ENCODE measurements at regions of chr6 and their contacts with region 1.

Region 1: DNA sequence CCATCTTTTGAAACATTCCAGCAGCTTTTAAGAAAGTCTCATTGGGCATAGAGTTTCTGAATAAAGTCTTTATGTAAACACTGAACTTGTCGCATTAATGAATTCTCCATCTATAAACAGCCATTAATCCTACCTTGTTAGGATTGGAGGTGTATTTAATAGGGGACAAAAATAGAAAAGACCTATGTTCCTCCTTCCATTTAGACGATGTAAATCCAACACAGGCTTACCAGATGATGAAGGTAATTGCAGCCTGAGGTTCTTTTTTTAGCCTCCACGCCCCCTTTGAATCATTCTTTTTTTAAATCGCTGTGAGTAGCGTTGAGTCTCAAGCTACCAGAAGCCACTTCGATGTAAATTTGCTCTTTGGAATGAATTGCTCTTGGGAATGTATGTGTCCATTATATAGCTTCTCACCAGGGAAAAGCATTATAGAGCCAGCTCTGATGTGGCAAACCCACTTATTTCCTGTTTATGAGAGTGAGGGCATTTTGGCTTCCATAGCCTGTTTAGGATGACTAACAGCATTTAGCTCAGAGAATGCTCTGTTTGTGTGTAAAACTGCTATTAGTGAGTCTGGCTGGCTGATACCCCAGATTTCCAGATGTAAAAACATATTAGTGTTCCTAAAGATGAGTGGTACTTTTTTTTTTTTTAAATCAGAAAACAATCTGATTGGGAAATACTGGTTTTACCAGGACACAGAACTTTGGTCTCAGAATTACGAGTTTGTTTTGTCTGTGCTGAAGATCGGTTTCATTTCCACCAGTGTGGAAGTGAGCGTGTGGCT is 74.9 kb upstream of the CLDN20 start:
- DNase-seq: peak in 1 of 2 experiments; percentile 43
- H3K4me3 ChIP-seq: no peak overlapping the region
- H3K27ac ChIP-seq: no peak overlapping the region
- H3K4me1 ChIP-seq: peaks cover 30% of the 10 kb centered on the region
- H3K27me3 ChIP-seq: no peaks in the 10 kb centered on the region
- CTCF ChIP-seq: no peak

Region 2: DNA sequence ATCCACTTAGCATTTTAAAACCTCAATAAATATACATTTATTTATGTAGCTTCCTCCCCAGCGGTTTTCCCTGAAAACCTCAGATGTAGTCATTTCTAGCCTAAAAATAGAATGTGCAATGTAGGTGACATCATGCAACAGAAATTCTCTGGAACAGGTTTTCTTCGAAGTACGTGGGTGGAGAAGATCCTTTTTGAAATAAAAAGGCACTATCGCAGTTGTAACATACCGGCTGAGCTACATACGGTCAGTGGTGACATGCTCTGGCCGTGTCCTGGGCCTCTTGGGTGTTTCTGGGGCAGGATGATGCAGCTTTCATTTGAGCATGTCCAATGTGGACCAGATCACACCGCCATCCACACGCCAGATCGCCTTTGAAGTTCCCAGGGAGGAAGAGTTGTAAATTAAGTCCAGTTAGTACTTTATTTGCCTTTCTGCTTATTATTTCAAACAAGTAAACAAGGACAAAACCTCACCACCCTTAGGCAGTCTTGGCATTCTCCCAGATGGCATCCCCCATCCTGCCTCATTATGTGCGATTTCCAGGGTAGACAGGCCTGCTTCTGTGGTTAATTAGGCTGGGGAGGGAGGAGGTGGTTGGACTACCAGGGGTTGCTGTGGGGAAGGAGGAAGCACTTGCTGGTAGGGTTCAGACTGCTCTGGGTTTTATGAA is 34.6 kb before region 1 on chr6:
- CTCF ChIA-PET with region 1: interaction called, 16 read pairs
- POLR2A ChIA-PET with region 1: no interaction called
- intact Hi-C with region 1: no loop called
- DNase-seq: peak; percentile 32 to 86
- H3K4me3 ChIP-seq: peak overlapping the region; percentile 0; the same call in 1 of the 2 replicates
- H3K27ac ChIP-seq: peak overlapping the region; percentile 58
- H3K4me1 ChIP-seq: peaks cover 61% of the 10 kb centered on the region
- H3K27me3 ChIP-seq: no peaks in the 10 kb centered on the region
- CTCF ChIP-seq: no peak

Region 3: DNA sequence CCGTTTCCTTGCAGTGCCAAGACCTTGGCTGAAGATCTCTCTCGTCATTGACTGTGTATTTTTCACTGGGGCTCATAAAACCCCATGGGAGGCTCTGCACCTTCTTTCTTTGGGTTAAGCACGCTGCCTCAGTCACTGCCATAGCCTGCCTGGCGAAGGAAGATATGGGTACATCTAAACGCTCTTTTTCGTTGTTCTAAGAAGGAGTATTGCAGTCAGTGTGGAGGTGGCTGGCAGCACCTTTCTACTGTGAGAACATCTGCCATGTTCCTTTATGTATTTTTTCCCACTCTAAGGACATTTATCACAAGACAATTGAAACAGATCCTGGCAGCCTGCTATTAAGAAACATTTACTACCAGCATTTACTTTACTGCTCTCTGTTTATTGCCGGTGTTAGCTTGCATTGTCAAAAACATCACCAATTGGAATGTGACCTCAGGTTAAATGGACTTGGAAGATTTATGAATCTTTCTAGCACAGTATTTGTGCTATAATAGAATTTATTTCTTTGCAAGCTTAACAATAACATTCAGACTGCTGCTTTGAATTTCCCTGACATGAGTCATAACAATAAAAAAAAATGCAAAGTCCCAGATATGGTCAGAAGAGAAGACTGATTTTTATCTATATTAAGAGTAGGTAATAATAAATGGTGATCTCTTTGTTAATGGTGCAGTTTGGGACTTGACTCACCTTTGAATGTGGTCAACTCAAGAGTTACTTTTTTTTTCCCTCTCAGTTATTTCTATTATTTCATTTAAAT is 12.7 kb after region 1 on chr6:
- CTCF ChIA-PET with region 1: no interaction called
- POLR2A ChIA-PET with region 1: interaction called, 28 read pairs
- intact Hi-C with region 1: no loop called
- DNase-seq: peak; percentile 5 to 97
- H3K4me3 ChIP-seq: no peak overlapping the region
- H3K27ac ChIP-seq: peak overlapping the region; percentile 78
- H3K4me1 ChIP-seq: peaks cover 21% of the 10 kb centered on the region
- H3K27me3 ChIP-seq: no peaks in the 10 kb centered on the region
- CTCF ChIP-seq: no peak

Region 4: GRCh38 chr6:155223646-155224451 is 34.9 kb after region 1 on chr6:
- CTCF ChIA-PET with region 1: no interaction called
- POLR2A ChIA-PET with region 1: interaction called, 5 read pairs
- intact Hi-C with region 1: loop called (anchors 1 kb)
- DNase-seq: peak; percentile 43 to 97
- H3K4me3 ChIP-seq: peak overlapping the region; percentile 9; the same call in 1 of the 2 replicates
- H3K27ac ChIP-seq: peak overlapping the region; percentile 92
- H3K4me1 ChIP-seq: peaks cover 25% of the 10 kb centered on the region
- H3K27me3 ChIP-seq: no peaks in the 10 kb centered on the region
- CTCF ChIP-seq: no peak

Region 5: GRCh38 chr6:155248008-155249001 is 59.4 kb after region 1 on chr6:
- CTCF ChIA-PET with region 1: interaction called, 15 read pairs
- POLR2A ChIA-PET with region 1: interaction called, 4 read pairs
- intact Hi-C with region 1: loop called (anchors 1 kb)
- DNase-seq: peak; percentile 61 to 81
- H3K4me3 ChIP-seq: peak overlapping the region; percentile 54
- H3K27ac ChIP-seq: peak overlapping the region; percentile 96
- H3K4me1 ChIP-seq: peaks cover 31% of the 10 kb centered on the region
- H3K27me3 ChIP-seq: no peaks in the 10 kb centered on the region
- CTCF ChIP-seq: peak; percentile 82

Region 6: DNA sequence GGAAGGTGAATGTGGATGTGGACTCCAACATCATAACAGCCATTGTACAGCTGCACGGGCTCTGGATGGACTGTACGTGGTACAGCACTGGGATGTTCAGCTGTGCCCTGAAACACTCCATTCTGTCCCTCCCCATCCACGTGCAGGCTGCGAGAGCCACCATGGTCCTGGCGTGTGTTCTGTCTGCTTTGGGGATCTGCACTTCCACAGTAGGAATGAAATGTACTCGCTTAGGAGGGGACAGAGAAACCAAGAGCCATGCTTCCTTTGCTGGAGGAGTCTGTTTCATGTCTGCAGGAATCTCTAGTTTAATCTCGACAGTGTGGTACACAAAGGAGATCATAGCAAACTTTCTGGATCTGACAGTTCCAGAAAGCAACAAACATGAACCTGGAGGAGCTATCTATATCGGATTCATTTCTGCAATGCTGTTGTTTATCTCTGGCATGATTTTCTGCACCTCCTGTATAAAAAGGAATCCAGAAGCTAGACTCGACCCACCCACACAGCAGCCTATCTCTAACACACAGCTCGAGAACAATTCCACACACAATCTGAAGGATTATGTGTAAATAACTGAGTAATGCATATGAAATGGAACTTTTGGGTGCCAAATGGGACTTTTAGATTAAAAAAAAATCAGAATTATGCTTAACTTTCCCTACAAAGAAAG is 87.0 kb after region 1 on chr6:
- CTCF ChIA-PET with region 1: no interaction called
- POLR2A ChIA-PET with region 1: no interaction called
- intact Hi-C with region 1: no loop called
- DNase-seq: no peak
- H3K4me3 ChIP-seq: no peak overlapping the region
- H3K27ac ChIP-seq: no peak overlapping the region
- H3K4me1 ChIP-seq: no peaks in the 10 kb centered on the region
- H3K27me3 ChIP-seq: no peaks in the 10 kb centered on the region
- CTCF ChIP-seq: no peak

Region 7: GRCh38 chr6:155314092-155314772 is 125.3 kb after region 1 on chr6 and contains the start of gene TFB1M:
- CTCF ChIA-PET with region 1: no interaction called
- POLR2A ChIA-PET with region 1: no interaction called
- intact Hi-C with region 1: loop called (anchors 5 kb)
- DNase-seq: peak; percentile 95
- H3K4me3 ChIP-seq: peak within 1 kb of the TSS; percentile 85
- H3K27ac ChIP-seq: peak within 1 kb of the TSS; percentile 77
- H3K4me1 ChIP-seq: peaks cover 30% of the 10 kb centered on the region
- H3K27me3 ChIP-seq: no peaks in the 10 kb centered on the region
- CTCF ChIP-seq: no peak
- total RNA-seq, gene TFB1M: 17.7 and 19.5 TPM in 2 replicates

Region 8: GRCh38 chr6:155498370-155498769 is 309.5 kb after region 1 on chr6:
- CTCF ChIA-PET with region 1: no interaction called
- POLR2A ChIA-PET with region 1: no interaction called
- intact Hi-C with region 1: no loop called
- DNase-seq: no peak
- H3K4me3 ChIP-seq: no peak overlapping the region
- H3K27ac ChIP-seq: no peak overlapping the region
- H3K4me1 ChIP-seq: peaks cover 14% of the 10 kb centered on the region
- H3K27me3 ChIP-seq: no peaks in the 10 kb centered on the region
- CTCF ChIP-seq: no peak

Measured in PC-9 (cell line).